Vagina (tissue), 2 donors: ENCODE measurements at regions of chr2 and their contacts with region 1.

Region 1: DNA sequence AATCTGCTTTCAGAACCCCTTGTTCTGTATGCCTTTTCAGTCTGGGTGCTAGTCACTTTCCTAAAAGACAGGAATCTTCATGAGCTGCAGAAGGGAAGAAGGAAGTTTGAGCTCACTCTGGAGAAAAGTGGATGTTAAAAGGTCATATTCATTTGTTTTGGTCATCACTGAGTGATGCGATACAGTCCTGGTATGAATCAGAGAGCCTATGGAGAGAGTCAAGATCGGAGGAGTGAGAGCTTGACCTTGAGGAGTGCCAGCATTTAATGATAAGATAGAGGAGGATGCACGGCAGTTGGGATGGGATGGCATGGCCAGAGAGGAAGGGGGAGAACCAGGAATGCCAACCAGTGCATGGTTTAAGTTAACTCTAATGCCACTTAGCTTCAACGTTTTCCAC is 19.6 kb downstream of the USP39 start:
- DNase-seq: no peak
- H3K4me3 ChIP-seq: no peak overlapping the region
- H3K27ac ChIP-seq: no peak overlapping the region
- H3K4me1 ChIP-seq: no peaks in the 10 kb centered on the region
- H3K27me3 ChIP-seq: no peaks in the 10 kb centered on the region
- CTCF ChIP-seq: no peak
- POLR2A ChIP-seq: no peak

Region 2: GRCh38 chr2:84830095-84830494 is 805.5 kb before region 1 on chr2:
- intact Hi-C with region 1: no loop called
- DNase-seq: no peak
- H3K4me3 ChIP-seq: no peak overlapping the region
- H3K27ac ChIP-seq: no peak overlapping the region
- H3K4me1 ChIP-seq: no peaks in the 10 kb centered on the region
- H3K27me3 ChIP-seq: no peaks in the 10 kb centered on the region
- CTCF ChIP-seq: no peak
- POLR2A ChIP-seq: no peak

Region 3: GRCh38 chr2:85455552-85456090 is 180.0 kb before region 1 on chr2:
- intact Hi-C with region 1: no loop called
- DNase-seq: no peak
- H3K4me3 ChIP-seq: no peak overlapping the region
- H3K27ac ChIP-seq: no peak overlapping the region
- H3K4me1 ChIP-seq: no peaks in the 10 kb centered on the region
- H3K27me3 ChIP-seq: no peaks in the 10 kb centered on the region
- CTCF ChIP-seq: no peak
- POLR2A ChIP-seq: no peak

Region 4: DNA sequence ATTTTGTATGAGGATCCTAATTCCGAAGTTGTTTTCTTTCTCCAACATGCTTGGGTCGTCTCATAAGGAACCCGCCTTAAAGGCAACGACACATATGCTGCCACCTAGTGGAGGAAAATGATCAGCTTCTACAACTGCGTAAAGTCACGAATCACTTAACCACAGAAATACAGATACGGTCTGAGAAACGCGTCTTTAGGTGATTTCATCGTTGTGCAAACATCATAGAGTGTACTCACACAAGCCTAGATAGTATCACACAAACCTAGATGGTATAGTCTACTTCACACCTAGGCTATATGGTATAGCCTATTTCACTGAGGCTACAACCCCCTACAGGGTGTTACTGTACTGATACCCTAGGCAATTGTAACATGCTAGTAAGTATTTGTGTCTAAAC is 71.7 kb after region 1 on chr2:
- intact Hi-C with region 1: loop called (anchors 5 kb)
- DNase-seq: no peak
- H3K4me3 ChIP-seq: no peak overlapping the region
- H3K27ac ChIP-seq: no peak overlapping the region
- H3K4me1 ChIP-seq: peaks cover 5% of the 10 kb centered on the region
- H3K27me3 ChIP-seq: no peaks in the 10 kb centered on the region
- CTCF ChIP-seq: peak; percentile 46 to 83 (median 75)
- POLR2A ChIP-seq: no peak

Region 5: DNA sequence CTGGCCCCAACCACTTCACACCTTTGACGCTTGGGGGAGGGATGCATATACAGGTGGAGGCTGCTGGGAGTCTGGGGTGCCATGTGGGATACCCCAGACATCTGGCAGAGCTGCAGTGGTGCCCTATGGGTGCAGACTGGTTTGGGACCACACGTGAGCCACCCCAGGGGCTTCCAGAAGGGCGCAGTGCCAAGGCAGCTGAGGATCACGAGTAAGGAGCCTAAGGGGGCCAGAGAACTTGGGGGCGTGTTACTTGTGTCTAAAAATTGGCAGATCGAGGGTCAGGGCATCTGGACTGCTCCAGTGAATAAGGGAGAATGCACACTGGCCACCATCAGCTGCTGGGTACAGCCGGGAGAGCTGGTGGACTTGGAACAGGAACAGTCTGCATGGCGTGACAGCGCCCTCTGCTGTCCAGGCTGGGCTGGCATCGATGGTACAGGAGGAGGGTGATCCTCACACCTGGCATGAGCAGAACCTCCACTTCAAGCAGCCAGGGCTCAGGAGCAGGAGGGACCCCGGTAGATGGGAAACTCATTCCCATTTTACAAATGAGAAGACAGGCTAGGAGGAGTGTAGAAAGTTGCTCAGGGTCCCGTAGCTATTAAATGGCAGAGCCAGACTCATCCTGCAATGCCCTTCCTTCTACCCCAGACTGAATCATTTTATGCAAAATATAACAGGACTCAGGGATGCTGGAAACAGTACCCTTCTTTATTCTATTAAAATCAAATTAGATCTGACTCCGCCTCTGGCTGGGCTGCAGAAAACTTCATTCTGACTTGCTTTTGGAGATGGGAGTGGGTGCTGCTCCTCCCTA is 178.6 kb after region 1 on chr2:
- intact Hi-C with region 1: loop called (anchors 5 kb)
- DNase-seq: no peak
- H3K4me3 ChIP-seq: no peak overlapping the region
- H3K27ac ChIP-seq: no peak overlapping the region
- H3K4me1 ChIP-seq: peaks cover 23% of the 10 kb centered on the region
- H3K27me3 ChIP-seq: no peaks in the 10 kb centered on the region
- CTCF ChIP-seq: peak; percentile 86 to 98 (median 87)
- POLR2A ChIP-seq: no peak

Region 6: GRCh38 chr2:86598966-86599365 is 963.3 kb after region 1 on chr2:
- intact Hi-C with region 1: loop called (anchors 5 kb)
- DNase-seq: no peak
- H3K4me3 ChIP-seq: no peak overlapping the region
- H3K27ac ChIP-seq: no peak overlapping the region
- H3K4me1 ChIP-seq: no peaks in the 10 kb centered on the region
- H3K27me3 ChIP-seq: no peaks in the 10 kb centered on the region
- CTCF ChIP-seq: no peak
- POLR2A ChIP-seq: no peak